ENCODE measurements at regions of chr13 and their contacts with region 1.

Region 1: DNA sequence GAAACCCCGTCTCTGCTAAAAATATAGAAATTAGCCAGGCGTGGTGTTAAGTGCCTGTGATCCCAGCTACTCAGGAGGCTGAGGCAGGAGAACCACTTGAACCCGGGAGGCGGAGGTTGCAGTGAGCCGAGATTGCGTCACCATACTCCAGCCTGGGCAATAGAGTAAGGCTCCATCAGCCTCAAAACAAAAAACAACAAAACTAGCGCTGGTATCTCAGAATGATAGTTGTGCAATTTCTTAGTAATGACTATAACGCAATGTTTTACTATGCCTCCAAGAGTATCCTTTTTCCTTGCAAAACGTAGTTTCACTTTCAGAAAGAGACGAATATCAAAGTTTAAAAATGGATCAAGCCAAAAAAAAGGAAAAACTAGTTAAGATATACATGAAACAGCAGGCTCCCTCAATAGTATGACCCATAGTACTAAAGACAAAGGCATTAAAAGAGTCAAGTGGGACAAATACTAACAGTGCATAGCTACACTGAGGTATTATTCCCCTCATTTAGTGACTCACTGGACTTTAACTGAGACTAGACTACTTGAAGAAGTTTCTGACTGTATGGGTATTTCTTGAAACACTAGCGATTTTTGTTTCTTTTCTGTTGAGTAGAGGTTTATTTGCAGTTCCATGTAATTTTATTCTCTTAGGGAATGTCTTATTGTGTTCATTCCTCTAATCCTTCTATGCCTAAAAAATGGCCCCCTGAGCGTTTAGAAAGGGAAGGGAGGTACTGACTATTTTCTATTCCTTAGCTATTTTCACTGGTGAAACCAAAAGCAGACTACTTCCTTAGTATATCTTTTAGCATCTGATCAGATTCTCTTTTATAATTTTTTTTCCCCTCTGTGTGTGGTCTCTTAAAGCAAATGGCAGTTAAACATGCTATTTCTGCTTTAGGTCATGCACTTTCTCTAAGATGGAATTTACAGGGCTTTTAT is 10.4 kb upstream of the ITM2B start:
- DNase-seq: no peak
- H3K4me3 ChIP-seq: no peak overlapping the region
- CTCF ChIP-seq: no peak
- POLR2A ChIP-seq: no peak

Region 2: GRCh38 chr13:47233734-47234133 is 988.9 kb before region 1 on chr13:
- intact Hi-C with region 1: no loop called
- DNase-seq: no peak
- H3K4me3 ChIP-seq: no peak overlapping the region
- CTCF ChIP-seq: no peak
- POLR2A ChIP-seq: no peak

Region 3: DNA sequence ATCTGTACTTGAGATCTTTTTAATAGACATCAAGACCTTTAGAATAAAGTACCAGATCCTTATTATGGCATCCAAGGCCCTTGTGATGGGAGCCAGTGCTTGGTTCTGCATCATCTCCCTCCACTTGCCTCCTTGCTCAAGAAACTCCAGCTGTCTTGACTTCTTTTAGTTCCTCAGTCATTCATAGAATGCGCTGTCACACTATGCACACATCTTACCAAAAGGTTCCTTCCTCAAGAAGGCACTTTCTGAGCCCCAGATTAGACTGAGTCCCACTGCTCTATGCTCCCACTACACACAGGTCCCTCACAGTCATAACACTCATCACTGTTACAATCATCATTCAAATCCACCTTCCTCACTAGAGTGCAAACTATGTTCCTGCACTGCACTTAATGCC is 47.4 kb before region 1 on chr13:
- intact Hi-C with region 1: loop called (anchors 10 kb)
- DNase-seq: no peak
- H3K4me3 ChIP-seq: no peak overlapping the region
- CTCF ChIP-seq: no peak
- POLR2A ChIP-seq: no peak

Region 4: DNA sequence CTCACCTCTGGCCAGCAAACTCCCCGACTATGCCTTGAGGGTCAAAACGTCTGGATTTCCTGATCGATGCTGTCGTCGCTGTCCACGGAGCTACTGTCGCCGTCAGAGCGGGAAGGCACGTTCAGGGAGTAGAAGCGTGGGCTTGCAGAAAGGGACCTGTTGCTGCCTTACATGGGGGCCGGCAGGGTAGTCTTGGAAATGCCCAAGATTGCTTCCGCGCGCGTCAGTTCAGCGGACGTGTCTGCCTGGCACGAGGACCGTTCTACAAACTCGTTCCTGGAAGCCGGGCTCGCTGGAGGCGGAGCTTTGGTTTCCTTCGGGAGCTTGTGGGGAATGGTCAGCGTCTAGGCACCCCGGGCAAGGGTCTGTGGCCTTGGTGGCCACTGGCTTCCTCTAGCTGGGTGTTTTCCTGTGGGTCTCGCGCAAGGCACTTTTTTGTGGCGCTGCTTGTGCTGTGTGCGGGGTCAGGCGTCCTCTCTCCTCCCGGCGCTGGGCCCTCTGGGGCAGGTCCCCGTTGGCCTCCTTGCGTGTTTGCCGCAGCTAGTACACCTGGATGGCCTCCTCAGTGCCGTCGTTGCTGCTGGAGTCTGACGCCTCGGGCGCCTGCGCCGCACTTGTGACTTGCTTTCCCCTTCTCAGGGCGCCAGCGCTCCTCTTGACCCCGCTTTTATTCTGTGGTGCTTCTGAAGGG is 96.3 kb after region 1 on chr13:
- intact Hi-C with region 1: no loop called
- DNase-seq: no peak
- H3K4me3 ChIP-seq: no peak overlapping the region
- CTCF ChIP-seq: no peak
- POLR2A ChIP-seq: no peak